A549 (cell line): ENCODE measurements at regions of chr19 and their contacts with region 1.

Region 1: DNA sequence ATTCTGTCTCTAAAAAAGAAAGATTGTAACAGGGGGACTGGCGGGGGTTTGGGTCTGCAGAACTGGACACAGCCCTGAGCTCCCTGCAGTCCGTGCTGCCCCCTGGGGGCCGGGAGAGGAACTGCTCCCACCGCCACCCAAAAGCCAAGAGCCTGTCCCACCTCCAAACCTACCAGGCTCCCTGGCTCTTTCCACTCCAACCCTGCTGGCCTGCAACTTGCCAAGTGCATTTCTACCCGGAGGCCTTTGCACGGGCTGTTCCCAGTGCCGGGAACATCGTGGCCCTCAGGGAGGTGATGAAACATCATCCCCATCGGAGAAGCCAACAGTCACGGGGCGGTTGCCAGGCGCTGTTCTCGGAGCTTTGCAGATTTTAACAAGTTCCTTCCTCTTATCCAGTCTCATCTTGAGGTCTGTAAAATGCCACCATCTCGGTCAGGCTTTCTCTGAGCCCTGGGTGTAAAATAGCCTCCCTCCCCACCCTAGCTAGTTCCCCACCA is 50.7 kb downstream of the SMIM24 start:
- DNase-seq: peak; percentile 69 to 76
- ATAC-seq: peak; percentile 80 to 85
- H3K4me3 ChIP-seq: no peak overlapping the region
- H3K27ac ChIP-seq: peak overlapping the region; percentile 73 to 81; a peak in 4 of 6 replicates
- H3K4me1 ChIP-seq: peaks cover 15% of the 10 kb centered on the region
- CTCF ChIP-seq: peak; percentile 59
- EP300 ChIP-seq: no peak
- POLR2A ChIP-seq: no peak
- RAD21 ChIP-seq: peak; percentile 71 to 77

Region 2: DNA sequence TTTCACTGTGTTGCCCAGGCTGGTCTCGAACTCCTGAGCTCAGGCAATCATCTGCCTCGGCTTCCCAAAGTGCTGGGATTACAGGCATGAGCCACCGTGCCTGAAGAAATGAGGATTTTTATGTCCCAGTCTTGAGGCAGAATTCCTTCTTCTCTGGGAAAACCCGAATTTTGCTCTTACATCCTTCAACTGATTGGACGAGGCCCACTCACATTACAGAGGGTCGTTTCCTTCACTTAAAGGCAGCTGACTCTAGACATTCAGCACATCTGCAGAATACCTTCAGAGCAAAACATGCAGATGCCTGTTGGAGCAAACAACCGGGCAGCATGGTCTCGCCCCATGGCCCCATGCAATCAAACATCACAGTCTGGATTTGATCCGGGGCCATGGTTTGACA is 99.6 kb before region 1 on chr19:
- CTCF ChIA-PET with region 1: interaction called, 22 read pairs
- POLR2A ChIA-PET with region 1: no interaction called
- DNase-seq: no peak
- ATAC-seq: no peak
- H3K4me3 ChIP-seq: no peak overlapping the region
- H3K27ac ChIP-seq: no peak overlapping the region
- H3K4me1 ChIP-seq: peaks cover 8% of the 10 kb centered on the region
- CTCF ChIP-seq: no peak
- EP300 ChIP-seq: no peak
- POLR2A ChIP-seq: no peak
- RAD21 ChIP-seq: no peak

Region 3: GRCh38 chr19:3336680-3337523 is 92.7 kb before region 1 on chr19:
- CTCF ChIA-PET with region 1: interaction called, 15 read pairs
- POLR2A ChIA-PET with region 1: no interaction called
- DNase-seq: peak in 1 of 2 experiments; percentile 79
- ATAC-seq: peak; percentile 84 to 85
- H3K4me3 ChIP-seq: no peak overlapping the region
- H3K27ac ChIP-seq: peak overlapping the region; percentile 85 to 94
- H3K4me1 ChIP-seq: peaks cover 45% of the 10 kb centered on the region
- CTCF ChIP-seq: no peak
- EP300 ChIP-seq: peak; percentile 30 to 52; a peak in 2 of 5 replicates
- POLR2A ChIP-seq: no peak
- RAD21 ChIP-seq: peak in 1 of 2 experiments; percentile 27; a peak in 1 of 5 replicates

Region 4: DNA sequence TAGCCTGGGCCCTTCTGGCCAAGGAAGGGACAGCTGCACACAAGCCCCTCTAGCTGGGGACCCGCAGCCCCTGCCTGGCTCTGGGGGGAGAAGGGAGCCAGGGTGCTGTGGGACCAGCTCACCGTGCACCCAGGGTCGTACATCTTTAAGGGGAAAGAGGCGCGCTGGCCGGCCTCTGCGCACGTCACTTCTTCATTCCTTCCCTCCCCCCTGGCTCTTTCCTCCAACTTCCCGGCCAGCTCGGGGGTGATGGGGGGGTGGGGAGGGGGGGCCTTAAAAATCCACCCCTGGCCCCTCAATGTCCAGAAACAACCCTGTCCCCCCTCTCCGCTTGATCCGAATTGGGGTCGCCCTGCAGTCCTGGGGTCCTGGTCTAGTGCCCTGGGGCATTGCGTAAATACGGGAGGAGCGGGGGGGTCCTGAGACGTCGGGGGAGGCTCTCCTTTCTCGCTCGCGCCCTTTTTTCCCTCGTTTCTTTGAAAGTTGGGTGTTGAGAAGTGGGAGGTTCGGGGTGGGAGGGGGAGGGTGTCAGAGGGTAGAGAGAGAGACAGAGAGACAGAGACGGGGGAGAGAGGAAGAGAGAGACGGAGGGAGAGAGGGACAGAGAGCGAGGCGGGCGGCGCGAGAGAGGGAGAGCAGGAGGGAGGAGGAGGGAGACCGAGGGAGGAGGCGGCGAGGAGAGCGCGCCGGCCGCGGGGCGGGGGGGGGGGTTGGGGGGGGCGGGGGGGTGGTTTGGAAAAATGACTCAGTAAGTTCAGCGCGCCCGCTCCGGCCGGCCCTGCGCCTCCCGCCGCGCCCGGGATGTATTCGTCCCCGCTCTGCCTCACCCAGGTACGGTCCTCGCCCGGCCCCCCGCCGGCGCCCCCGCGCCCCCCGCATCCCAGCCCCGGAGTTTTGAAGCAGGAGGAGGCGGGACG is 63.5 kb before region 1 on chr19 and contains the start of gene NFIC:
- CTCF ChIA-PET with region 1: interaction called, 18 read pairs
- POLR2A ChIA-PET with region 1: no interaction called
- DNase-seq: peak in 1 of 2 experiments; percentile 87
- ATAC-seq: peak; percentile 64 to 71
- H3K4me3 ChIP-seq: peak within 1 kb of the TSS; percentile 83
- H3K27ac ChIP-seq: peak within 1 kb of the TSS; percentile 99 to 100
- H3K4me1 ChIP-seq: peaks cover 59% of the 10 kb centered on the region
- CTCF ChIP-seq: no peak
- EP300 ChIP-seq: no peak
- POLR2A ChIP-seq: no peak; the same call in 1 of the 2 replicates
- RAD21 ChIP-seq: no peak
- polyA plus RNA-seq, gene NFIC: 2.6 and 4.7 TPM in 2 replicates

Region 5: GRCh38 chr19:3387645-3388589 is 41.7 kb before region 1 on chr19:
- CTCF ChIA-PET with region 1: interaction called, 13 read pairs
- POLR2A ChIA-PET with region 1: no interaction called
- DNase-seq: peak; percentile 44 to 68
- ATAC-seq: peak; percentile 56 to 66
- H3K4me3 ChIP-seq: no peak overlapping the region
- H3K27ac ChIP-seq: peak overlapping the region; percentile 73 to 89
- H3K4me1 ChIP-seq: peaks cover 60% of the 10 kb centered on the region
- CTCF ChIP-seq: no peak
- EP300 ChIP-seq: no peak
- POLR2A ChIP-seq: no peak
- RAD21 ChIP-seq: no peak

Region 6: DNA sequence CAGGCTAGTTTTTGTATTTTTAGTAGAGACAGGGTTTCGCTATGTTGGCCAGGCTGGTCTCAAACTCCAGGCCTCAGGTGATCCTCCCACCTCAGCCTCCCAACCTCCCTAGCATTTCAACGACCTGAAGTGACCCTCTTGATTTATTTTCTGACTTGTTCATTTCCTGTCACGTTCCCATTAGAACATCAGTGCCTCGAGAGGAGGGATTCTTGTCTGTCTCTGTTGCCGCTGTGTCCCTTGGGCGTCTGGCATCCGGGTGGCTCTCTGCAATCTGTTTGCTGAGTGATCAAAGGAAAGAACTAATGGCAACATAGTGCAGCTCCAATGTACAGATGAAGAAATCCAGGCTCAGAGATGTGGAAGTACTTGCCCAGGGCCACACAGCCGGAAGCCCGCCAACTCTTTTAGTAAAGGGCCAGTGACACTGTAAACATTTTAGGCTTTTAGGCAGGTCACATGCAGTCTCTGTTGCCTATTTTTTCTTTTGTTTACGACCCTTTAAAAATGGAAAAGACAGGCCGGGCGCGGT is 15.8 kb before region 1 on chr19:
- CTCF ChIA-PET with region 1: interaction called, 39 read pairs
- POLR2A ChIA-PET with region 1: no interaction called
- DNase-seq: peak in 1 of 2 experiments; percentile 37
- ATAC-seq: no peak
- H3K4me3 ChIP-seq: no peak overlapping the region
- H3K27ac ChIP-seq: peak overlapping the region in 1 of 2 experiments; percentile 35; a peak in 1 of 6 replicates
- H3K4me1 ChIP-seq: peaks cover 10% of the 10 kb centered on the region; the same call in 2 of the 3 replicates
- CTCF ChIP-seq: no peak
- EP300 ChIP-seq: no peak
- POLR2A ChIP-seq: no peak
- RAD21 ChIP-seq: no peak

Region 7: DNA sequence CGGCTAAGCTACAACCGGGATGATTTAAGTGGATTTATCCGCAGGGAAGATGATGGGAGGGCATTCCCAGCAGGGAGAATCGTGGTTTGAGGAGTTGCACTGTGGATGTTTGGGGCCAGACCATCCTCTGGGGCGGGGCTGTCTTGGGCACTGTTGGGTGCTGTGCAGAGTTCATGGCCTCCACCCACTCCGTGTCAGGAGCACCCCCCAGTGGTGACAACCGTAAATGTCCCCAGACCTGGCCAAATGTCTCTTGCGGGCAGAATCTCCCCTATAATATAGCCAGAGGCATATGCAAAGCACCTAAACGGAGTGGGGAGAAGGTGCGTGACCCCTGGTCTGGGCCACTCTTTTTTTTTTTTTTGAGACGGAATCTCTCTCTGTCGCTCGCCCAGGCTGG is 10.5 kb after region 1 on chr19:
- CTCF ChIA-PET with region 1: interaction called, 18 read pairs
- POLR2A ChIA-PET with region 1: no interaction called
- DNase-seq: peak; percentile 63 to 73
- ATAC-seq: peak; percentile 62 to 67; a peak in 5 of 6 replicates
- H3K4me3 ChIP-seq: no peak overlapping the region
- H3K27ac ChIP-seq: no peak overlapping the region; a peak in 1 of 6 replicates
- H3K4me1 ChIP-seq: peaks cover 10% of the 10 kb centered on the region; the same call in 1 of the 3 replicates
- CTCF ChIP-seq: peak; percentile 47
- EP300 ChIP-seq: no peak
- POLR2A ChIP-seq: no peak
- RAD21 ChIP-seq: peak; percentile 51 to 67; a peak in 4 of 5 replicates

Region 8: DNA sequence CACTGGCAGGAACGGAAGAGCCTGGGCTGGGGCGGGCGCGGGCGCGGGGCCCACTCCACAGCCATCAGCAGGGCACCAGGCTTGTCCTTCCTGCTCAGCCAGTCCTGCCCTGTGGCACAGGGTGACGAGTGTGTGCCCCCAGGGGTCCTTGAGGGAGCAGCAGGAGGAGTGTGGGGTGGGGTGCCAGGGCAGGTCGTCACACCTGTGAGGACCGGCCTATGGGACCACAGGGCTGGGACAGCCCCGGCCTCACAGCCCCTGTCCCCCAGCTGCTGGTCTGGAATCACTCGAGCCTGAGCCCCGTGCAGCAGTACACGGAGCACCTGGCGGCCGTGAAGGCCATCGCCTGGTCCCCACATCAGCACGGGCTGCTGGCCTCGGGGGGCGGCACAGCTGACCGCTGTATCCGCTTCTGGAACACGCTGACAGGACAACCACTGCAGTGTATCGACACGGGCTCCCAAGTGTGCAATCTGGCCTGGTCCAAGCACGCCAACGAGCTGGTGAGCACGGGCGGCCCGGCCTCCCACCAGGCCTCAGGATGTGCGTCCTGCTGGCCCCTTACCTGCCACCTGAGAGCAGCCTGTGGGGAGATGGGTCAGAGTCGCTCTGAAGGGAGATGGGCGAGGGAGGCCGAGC is 102.6 kb after region 1 on chr19:
- CTCF ChIA-PET with region 1: no interaction called
- POLR2A ChIA-PET with region 1: no interaction called
- DNase-seq: no peak
- ATAC-seq: no peak
- H3K4me3 ChIP-seq: no peak overlapping the region
- H3K27ac ChIP-seq: no peak overlapping the region
- H3K4me1 ChIP-seq: no peaks in the 10 kb centered on the region
- CTCF ChIP-seq: no peak
- EP300 ChIP-seq: no peak
- POLR2A ChIP-seq: no peak
- RAD21 ChIP-seq: no peak

Region 9: DNA sequence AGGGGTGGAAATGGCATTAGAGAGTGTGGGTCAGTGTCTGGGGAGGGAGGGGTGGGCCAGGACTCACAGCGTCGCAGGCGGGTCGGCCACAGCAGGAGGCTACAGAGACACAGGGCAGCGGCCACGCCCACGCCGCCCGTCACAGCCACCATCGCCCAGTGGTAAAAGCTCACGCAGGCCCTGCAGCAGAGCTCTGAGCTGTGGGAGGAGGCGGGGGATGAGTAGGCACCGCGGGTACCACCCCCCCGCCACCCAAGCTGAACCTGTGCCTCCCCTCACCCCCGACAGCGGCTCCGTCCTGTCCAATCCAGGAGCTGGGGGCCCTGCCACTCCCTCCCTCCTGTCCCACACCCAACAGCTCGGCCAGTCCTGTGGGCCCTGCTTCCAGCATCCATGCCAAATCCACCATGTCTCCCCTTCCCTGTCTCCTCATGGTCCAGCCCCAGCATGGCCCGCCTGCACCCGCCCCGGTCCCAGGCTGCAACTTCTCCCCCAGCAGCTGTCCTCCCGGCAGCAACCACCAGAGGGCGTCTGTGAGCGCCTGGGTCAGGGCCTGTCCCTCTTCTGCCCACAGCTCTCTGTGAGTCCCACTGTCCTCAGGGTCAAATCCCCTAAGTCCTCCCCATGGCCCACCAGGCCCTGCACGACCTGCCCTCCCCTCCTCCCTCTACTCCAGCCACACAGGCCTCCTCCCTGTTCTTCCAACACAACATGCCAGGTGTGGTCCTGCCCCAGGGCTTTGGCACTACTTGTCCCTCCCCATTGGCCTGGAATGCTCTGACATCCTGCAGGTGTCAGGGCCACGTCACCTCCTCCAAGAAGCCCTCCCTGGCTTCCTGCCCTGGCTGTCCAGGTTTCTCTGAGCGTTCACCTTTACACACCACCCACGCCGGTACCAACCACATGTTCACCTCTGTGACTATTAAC is 115.4 kb after region 1 on chr19:
- CTCF ChIA-PET with region 1: no interaction called
- POLR2A ChIA-PET with region 1: no interaction called
- DNase-seq: peak; percentile 63 to 65
- ATAC-seq: peak; percentile 73 to 83
- H3K4me3 ChIP-seq: no peak overlapping the region
- H3K27ac ChIP-seq: peak overlapping the region in 1 of 2 experiments; percentile 43; a peak in 2 of 6 replicates
- H3K4me1 ChIP-seq: no peaks in the 10 kb centered on the region
- CTCF ChIP-seq: peak; percentile 69
- EP300 ChIP-seq: no peak
- POLR2A ChIP-seq: no peak
- RAD21 ChIP-seq: peak; percentile 65 to 70